K562 (cell line): ENCODE measurements at regions of chr9 and their contacts with region 1.

Region 1: GRCh38 chr9:111983484-111983908 is 86.9 kb downstream of the UGCG start:
- DNase-seq: no peak
- ATAC-seq: no peak
- H3K4me3 ChIP-seq: no peak overlapping the region
- H3K27ac ChIP-seq: no peak overlapping the region
- H3K4me1 ChIP-seq: peaks cover 9 to 11% of the 10 kb centered on the region in 2 experiments; a peak in 4 of 5 replicates
- H3K27me3 ChIP-seq: peaks cover 0 to 6% of the 10 kb centered on the region in 2 experiments; a peak in 3 of 5 replicates
- CTCF ChIP-seq: no peak
- EP300 ChIP-seq: no peak
- POLR2A ChIP-seq: no peak
- RAD21 ChIP-seq: no peak

Region 2: DNA sequence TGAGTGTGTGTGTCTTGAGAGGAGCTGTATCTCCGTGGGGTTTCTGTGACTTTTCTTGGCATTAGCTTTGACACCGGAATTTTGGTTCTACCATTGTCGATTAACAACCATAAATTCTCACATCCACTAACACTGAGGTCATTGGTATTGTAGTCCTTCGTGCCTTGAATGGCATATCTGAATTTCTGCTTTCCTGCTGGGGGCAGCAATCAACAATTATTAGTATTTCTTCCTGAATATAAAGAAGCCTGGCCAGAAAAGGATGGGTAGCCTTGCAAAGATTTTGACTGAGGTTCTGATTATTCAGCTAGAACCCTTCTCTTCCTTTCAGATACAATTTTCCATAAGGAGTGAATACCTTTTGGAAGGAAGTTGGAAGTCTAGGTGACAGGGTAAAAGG is 155.3 kb before region 1 on chr9:
- CTCF ChIA-PET with region 1: no interaction called
- POLR2A ChIA-PET with region 1: no interaction called
- in situ Hi-C with region 1: no loop called
- intact Hi-C with region 1: loop called (anchors 5 kb)
- DNase-seq: peak in 1 of 4 experiments; percentile 10
- ATAC-seq: peak; percentile 48; the same call in 2 of the 3 replicates
- H3K4me3 ChIP-seq: no peak overlapping the region
- H3K27ac ChIP-seq: no peak overlapping the region
- H3K4me1 ChIP-seq: no peaks in the 10 kb centered on the region
- H3K27me3 ChIP-seq: peaks cover 0 to 7% of the 10 kb centered on the region in 2 experiments; a peak in 3 of 5 replicates
- CTCF ChIP-seq: peak; percentile 8 to 46 (median 26); a peak in 3 of 6 replicates
- EP300 ChIP-seq: no peak
- POLR2A ChIP-seq: no peak
- RAD21 ChIP-seq: peak; percentile 43 to 59

Region 3: DNA sequence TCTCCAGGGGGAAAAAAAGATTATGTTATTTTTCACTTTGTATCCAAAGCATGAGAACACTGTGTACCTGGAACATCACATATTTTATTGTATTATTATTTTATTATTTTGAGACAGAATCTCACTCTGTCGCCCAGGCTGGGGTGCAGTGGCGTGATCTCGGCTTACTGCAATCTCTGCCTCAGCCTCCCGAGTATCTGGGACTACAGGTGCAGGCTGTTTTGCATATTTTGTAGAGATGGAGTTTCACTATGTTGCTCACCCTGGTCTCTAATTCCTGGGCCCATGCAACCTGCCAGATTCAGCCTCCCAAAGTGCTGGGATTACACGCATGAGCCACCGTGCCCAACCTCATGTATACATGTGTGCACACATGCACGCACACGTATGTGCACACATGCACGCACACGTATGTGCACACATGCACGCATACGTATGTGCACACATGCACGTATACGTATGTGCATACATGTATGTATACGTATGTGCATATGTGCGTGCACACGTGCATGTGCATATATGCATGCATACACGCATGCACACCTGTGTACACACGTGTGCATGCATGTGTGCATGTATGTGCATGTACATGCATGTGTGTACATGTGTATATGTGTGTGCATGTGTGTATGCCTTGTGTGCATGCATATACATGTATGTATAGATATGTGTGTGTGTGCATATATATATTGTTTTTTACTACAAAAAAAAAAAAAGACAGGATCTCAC is 96.3 kb before region 1 on chr9:
- CTCF ChIA-PET with region 1: no interaction called
- POLR2A ChIA-PET with region 1: no interaction called
- in situ Hi-C with region 1: no loop called
- intact Hi-C with region 1: no loop called
- DNase-seq: no peak
- ATAC-seq: no peak
- H3K4me3 ChIP-seq: no peak overlapping the region
- H3K27ac ChIP-seq: no peak overlapping the region
- H3K4me1 ChIP-seq: peaks cover 5 to 6% of the 10 kb centered on the region in 2 experiments; a peak in 3 of 5 replicates
- H3K27me3 ChIP-seq: no peaks in the 10 kb centered on the region
- CTCF ChIP-seq: no peak
- EP300 ChIP-seq: no peak
- POLR2A ChIP-seq: no peak
- RAD21 ChIP-seq: no peak

Region 4: DNA sequence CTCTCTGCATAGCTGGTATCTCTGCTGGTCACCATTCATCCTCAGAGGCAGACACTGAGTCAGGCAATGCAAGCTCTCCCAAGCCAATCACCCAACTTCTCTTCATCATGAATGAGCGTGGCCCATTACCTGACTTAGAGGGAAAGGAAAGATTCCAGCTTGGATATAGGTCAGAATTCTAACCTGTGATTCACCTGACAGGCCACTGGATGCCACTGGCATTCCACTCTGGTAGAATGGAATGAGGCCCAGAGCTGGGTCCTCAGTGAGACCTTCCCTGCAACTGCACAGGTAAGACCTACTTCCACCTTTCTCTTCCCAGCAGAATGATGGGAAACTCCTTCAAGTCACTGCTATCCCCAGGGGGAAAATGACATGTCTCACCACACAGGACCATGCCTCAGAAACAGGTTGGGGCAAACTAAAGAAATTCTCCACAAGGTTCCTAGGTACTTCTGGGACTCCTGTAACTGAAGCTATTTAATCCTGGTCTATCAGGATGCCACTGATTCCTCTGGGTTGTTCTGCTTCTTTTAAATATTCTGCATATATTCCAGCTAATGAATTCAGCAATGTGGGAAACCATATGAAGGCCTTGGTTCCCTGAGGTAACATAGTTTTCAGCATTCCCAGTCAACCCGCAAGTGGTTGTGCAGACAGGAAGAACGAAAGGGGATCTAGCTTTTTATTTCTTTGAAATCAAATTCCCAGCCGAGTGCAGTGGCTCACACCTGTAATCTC is 129.6 kb after region 1 on chr9:
- CTCF ChIA-PET with region 1: no interaction called
- POLR2A ChIA-PET with region 1: no interaction called
- in situ Hi-C with region 1: no loop called
- intact Hi-C with region 1: no loop called
- DNase-seq: no peak
- ATAC-seq: peak; percentile 47; the same call in 2 of the 3 replicates
- H3K4me3 ChIP-seq: no peak overlapping the region
- H3K27ac ChIP-seq: no peak overlapping the region
- H3K4me1 ChIP-seq: no peaks in the 10 kb centered on the region
- H3K27me3 ChIP-seq: no peaks in the 10 kb centered on the region
- CTCF ChIP-seq: no peak; a peak in 1 of 6 replicates
- EP300 ChIP-seq: no peak
- POLR2A ChIP-seq: no peak
- RAD21 ChIP-seq: peak in 1 of 2 experiments; percentile 41; a peak in 2 of 4 replicates